ENCODE measurements at regions of chr6 and their contacts with region 1.

Region 1: GRCh38 chr6:138115877-138116660 is 8.8 kb upstream of the PERP start:
- ATAC-seq: peak; percentile 78 to 89 (median 86)
- H3K4me3 ChIP-seq: no peak overlapping the region
- H3K27ac ChIP-seq: no peak overlapping the region
- H3K4me1 ChIP-seq: no peaks in the 10 kb centered on the region

Region 2: GRCh38 chr6:137866914-137867684 is 249.0 kb before region 1 on chr6 and contains the start of gene TNFAIP3:
- in situ Hi-C with region 1: loop called in 1 of 9 experiments (anchors 25 kb)
- ATAC-seq: peak; percentile 83 to 95 (median 86)
- H3K4me3 ChIP-seq: peak within 1 kb of the TSS; percentile 67 to 89 (median 72)
- H3K27ac ChIP-seq: peak within 1 kb of the TSS in 1 of 2 donors; percentile 40
- H3K4me1 ChIP-seq: peaks cover 21 to 28% of the 10 kb centered on the region in 2 donors
- total RNA-seq, gene TNFAIP3: 2.2 to 10.0 (median 3.9) TPM

Region 3: DNA sequence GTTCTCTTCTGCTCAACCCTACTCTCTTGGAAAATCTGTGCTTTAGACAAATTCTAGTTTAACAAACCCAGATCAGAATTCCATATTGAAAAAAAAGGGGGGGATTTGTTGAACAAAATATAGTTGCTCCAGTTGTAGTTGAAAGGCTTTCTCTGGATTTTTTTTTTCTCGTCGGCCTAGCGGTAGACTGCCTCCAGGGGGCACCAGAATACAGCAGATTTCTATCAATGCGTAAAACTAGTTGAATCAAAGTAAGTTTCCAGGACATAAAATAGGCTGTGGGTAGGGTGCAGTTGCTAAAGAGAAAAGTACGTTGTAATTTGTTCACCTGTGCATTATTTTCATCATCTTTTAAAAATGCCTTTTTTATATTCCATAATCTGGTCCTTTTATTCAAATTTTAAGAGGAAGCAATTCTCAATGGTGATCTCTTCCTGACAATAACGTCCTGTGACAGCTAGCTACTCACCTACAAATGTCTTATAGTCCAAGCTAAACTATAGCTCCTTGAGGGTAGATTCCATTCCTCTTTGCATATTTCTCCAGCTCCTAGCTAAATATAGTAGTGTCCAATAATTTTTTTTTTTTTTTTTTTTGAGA is 114.2 kb before region 1 on chr6:
- in situ Hi-C with region 1: loop called in 1 of 9 experiments (anchors 5 kb)
- ATAC-seq: peak in 4 of 8 experiments; percentile 18 to 36 (median 25)
- H3K4me3 ChIP-seq: no peak overlapping the region
- H3K27ac ChIP-seq: no peak overlapping the region
- H3K4me1 ChIP-seq: no peaks in the 10 kb centered on the region

Region 4: DNA sequence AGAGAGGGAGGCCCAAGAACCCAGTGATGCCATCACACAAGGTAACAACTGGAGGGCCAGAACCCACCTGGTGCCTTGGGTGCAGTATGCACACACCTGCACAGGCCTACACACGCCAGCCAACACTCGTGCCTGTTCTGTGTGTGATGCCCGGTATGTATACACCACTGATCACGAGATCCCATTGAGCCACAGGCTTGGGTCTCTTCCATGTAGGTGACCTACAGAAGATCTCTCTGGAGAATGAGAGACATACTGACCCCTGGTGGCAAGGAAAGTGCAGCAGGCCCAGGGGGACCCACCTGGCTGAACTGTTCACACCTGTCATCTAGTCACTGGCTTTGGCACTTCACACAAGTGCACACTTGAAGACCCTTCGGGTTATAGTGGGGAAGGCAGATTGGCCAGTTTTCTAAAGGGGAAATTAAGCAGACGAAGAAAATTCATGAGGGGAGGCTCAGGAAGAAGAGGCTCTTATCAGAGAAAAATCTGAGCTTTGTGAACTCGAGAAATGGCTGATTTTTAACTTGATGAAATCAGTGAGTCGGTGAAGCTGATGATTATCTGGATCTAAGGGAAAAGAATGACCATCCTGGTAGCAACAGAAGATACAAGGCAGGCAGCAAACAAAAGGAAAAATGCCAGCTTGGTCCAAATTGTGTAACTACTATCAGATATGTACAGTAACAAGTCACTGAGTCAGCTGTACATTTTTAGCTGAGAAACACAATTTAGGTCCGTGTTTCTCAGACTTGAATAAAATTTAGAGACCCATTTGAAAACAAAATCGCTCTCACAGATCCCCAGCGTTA is 171.3 kb after region 1 on chr6:
- in situ Hi-C with region 1: loop called in 2 of 9 experiments (anchors 10 to 25 kb)
- ATAC-seq: peak in 4 of 8 experiments; percentile 37 to 75 (median 41)
- H3K4me3 ChIP-seq: no peak overlapping the region
- H3K27ac ChIP-seq: no peak overlapping the region
- H3K4me1 ChIP-seq: no peaks in the 10 kb centered on the region

Region 5: DNA sequence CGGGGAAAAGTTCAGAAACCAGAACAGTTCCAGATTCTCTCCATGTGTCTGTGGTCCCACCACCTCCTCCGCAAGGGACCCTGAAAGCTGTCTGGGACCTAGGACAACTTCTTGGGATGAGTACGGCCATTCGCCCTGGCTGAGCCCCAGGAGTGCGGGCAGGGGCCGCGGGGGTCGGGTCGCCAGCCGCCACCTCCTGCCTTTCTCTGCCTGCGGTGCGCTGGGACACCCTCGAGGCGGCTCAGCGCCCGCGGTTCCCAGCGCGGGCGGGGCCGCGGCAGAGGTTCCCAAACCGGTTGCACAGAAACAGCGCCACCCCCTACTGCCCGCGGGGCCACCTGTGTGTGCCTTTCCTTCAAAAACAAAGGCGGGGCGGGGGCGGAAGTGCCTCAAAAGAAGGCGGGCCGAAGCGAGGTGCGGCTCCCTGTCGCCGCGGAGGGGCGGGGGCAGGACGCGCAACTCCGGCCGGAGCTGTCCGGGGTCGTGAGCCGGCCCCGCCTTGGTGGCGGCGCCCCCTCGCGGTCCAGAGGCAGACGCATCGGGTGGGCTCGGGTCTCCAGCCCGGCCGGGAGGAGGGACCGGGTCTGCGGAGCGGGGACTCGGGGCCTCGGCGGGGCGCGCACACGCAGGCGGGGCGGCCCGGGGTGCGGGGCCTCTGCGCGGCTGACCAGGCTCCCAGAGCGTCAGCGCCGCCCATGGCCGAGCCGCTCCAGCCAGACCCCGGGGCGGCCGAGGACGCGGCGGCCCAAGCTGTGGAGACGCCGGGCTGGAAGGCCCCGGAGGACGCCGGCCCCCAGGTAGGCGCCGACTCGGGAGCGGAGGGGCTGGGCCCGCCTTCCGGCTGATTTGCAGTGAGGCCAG is 288.0 kb after region 1 on chr6 and contains the start of gene HEBP2:
- in situ Hi-C with region 1: loop called in 4 of 9 experiments (anchors 10 to 25 kb)
- ATAC-seq: peak; percentile 81 to 94 (median 91)
- H3K4me3 ChIP-seq: peak within 1 kb of the TSS; percentile 48 to 89 (median 54)
- H3K27ac ChIP-seq: peak within 1 kb of the TSS in 1 of 2 donors; percentile 18
- H3K4me1 ChIP-seq: peaks cover 0 to 10% of the 10 kb centered on the region in 2 donors
- total RNA-seq, gene HEBP2: 11.8 to 27.9 (median 15.0) TPM

Region 6: GRCh38 chr6:138509371-138509770 is 393.3 kb after region 1 on chr6:
- in situ Hi-C with region 1: loop called in 1 of 9 experiments (anchors 10 kb)
- ATAC-seq: peak in 6 of 8 experiments; percentile 43 to 83 (median 60)
- H3K4me3 ChIP-seq: no peak overlapping the region
- H3K27ac ChIP-seq: no peak overlapping the region
- H3K4me1 ChIP-seq: peaks cover 28 to 46% of the 10 kb centered on the region in 2 donors

Region 7: GRCh38 chr6:138773177-138774091 is 657.4 kb after region 1 on chr6 and contains the start of gene CCDC28A:
- in situ Hi-C with region 1: loop called in 7 of 9 experiments (anchors 25 kb)
- ATAC-seq: peak; percentile 92 to 97 (median 95)
- H3K4me3 ChIP-seq: peak within 1 kb of the TSS; percentile 54 to 99 (median 85)
- H3K27ac ChIP-seq: peak within 1 kb of the TSS; percentile 95 to 97
- H3K4me1 ChIP-seq: peaks cover 3 to 6% of the 10 kb centered on the region in 2 donors
- total RNA-seq, gene CCDC28A: 5.0 to 18.3 (median 9.6) TPM

Measured in motor neuron (in vitro differentiated cells).